ENCODE measurements at regions of chr2 and their contacts with region 1.

Region 1: DNA sequence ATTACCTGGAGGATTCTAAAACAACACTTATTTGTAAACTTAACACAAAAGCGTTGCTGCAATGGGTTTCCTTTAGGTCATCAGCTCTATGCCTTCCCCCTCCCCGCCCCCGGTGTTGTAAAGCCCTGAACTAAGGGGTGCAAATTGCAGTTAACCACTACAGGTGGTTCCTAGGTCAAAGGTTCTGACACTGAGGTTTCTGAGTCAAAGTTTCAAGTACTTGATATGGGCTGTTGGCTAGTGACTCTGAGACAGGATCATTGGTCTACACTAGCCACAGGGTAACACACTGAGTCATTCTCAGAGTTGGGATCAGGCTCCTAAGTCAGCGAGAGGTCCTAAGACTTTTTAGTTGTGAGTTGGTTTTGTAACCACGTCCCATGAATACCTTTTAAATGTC is 15.4 kb downstream of the IL1B start:
- DNase-seq: no peak
- ATAC-seq: peak; percentile 54 to 81 (median 67)
- H3K4me3 ChIP-seq: no peak overlapping the region
- H3K4me3 Mint-ChIP-seq: peak overlapping the region; percentile 14
- H3K27ac ChIP-seq: no peak overlapping the region
- H3K27ac Mint-ChIP-seq: peak overlapping the region; percentile 60 to 79
- H3K4me1 ChIP-seq: peaks cover 28% of the 10 kb centered on the region
- H3K4me1 Mint-ChIP-seq: peaks cover 46 to 51% of the 10 kb centered on the region in 2 donors
- H3K27me3 ChIP-seq: no peaks in the 10 kb centered on the region
- H3K27me3 Mint-ChIP-seq: no peaks in the 10 kb centered on the region
- CTCF ChIP-seq: no peak

Region 2: DNA sequence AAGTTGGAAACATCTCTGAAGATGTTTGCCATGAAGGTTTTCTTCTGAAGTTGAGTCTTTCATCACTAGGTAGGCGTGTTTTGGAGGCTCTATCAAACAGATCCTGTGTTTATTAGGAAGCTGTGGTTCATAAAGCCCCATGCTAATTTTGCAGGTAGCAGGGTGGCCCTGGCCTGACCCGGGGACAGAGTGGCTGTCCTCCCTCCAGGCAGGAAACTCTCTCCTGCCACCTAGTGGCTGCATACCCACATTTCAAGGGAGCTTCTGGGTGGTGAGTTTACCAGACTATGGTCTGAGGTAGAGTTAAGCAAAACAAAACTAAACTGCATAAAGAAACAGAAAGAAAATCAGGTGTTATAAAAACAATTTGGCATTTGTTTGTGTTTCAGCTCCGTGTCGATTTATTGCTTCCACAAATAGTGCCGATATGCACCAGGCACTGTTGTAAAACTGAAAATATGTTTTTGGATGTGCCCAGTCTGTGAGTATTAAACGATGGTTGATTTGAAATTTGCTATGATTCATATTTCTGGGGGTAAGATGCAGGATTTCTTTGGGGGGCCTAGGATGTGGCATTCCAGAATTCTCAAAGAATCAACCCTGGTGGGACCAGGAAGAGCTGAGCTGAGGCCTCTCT is 63.8 kb after region 1 on chr2:
- intact Hi-C with region 1: loop called (anchors 10 kb)
- DNase-seq: peak; percentile 68 to 78
- ATAC-seq: peak; percentile 61 to 82 (median 75)
- H3K4me3 ChIP-seq: no peak overlapping the region
- H3K4me3 Mint-ChIP-seq: peak overlapping the region; percentile 28
- H3K27ac ChIP-seq: no peak overlapping the region
- H3K27ac Mint-ChIP-seq: peak overlapping the region; percentile 34 to 52
- H3K4me1 ChIP-seq: peaks cover 18% of the 10 kb centered on the region
- H3K4me1 Mint-ChIP-seq: peaks cover 31 to 32% of the 10 kb centered on the region in 2 donors
- H3K27me3 ChIP-seq: no peaks in the 10 kb centered on the region
- H3K27me3 Mint-ChIP-seq: peaks cover 0 to 3% of the 10 kb centered on the region in 2 donors
- CTCF ChIP-seq: peak; percentile 91

Region 3: DNA sequence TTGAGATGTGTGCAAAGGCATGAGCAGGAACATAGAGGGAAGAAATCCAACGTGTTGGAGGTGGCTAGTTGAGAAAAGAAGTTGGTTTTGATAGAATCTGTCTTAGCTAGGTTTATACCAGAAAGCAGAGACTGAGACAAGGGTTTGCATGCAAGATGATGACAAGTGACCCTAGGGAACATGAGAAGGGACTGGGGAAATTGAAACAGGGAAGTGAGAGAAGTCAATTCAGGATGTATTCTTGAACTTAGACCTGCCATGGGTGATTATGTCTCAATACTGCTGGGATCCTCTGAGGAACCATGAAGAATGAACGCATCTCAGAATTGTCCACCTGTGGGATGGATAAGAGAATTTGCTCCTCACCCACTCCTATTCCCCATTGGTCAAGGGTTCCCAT is 204.6 kb after region 1 on chr2:
- intact Hi-C with region 1: no loop called
- DNase-seq: no peak
- ATAC-seq: no peak
- H3K4me3 ChIP-seq: no peak overlapping the region
- H3K4me3 Mint-ChIP-seq: no peak overlapping the region
- H3K27ac ChIP-seq: no peak overlapping the region
- H3K27ac Mint-ChIP-seq: no peak overlapping the region
- H3K4me1 ChIP-seq: no peaks in the 10 kb centered on the region
- H3K4me1 Mint-ChIP-seq: no peaks in the 10 kb centered on the region
- H3K27me3 ChIP-seq: no peaks in the 10 kb centered on the region
- H3K27me3 Mint-ChIP-seq: peaks cover 42 to 57% of the 10 kb centered on the region in 2 donors
- CTCF ChIP-seq: no peak